ENCODE measurements at regions of chr9 and their contacts with region 1.

Region 1: DNA sequence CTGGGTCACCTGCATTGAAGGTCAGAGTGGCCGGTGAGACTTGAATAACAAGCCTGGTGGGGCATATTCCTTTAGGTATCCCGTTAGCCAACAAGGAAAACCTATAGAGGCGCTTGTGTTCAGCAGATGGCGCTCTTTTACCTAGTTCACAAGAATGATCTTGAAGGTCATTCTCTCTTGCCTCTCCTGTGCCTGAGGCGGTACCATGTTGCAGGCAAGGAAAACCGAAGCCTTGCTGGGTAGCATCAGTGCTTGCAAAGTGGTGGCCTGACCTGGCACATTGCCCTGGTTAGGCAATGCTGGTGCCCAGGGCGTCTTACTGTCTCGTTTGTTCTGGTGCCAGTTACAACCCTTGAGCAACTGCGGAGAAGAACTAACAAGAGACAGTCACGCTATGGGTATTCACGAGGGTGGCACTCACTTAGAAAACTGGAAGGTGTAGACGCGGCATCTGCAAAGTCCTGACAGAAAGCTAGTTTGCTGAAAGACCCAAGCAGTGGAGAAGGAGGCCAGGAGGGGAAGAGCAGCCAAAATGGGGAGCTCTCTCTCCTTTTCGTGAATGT is 56.7 kb downstream of the AOPEP start:
- DNase-seq: peak; percentile 83
- H3K4me3 ChIP-seq: no peak overlapping the region
- H3K27ac ChIP-seq: no peak overlapping the region
- H3K4me1 ChIP-seq: no peaks in the 10 kb centered on the region
- H3K27me3 ChIP-seq: no peaks in the 10 kb centered on the region
- CTCF ChIP-seq: peak; percentile 59

Region 2: GRCh38 chr9:95018099-95018936 is 235.1 kb after region 1 on chr9:
- intact Hi-C with region 1: loop called (anchors 10 kb)
- DNase-seq: no peak
- H3K4me3 ChIP-seq: no peak overlapping the region
- H3K27ac ChIP-seq: peak overlapping the region; percentile 34
- H3K4me1 ChIP-seq: peaks cover 2% of the 10 kb centered on the region
- H3K27me3 ChIP-seq: no peaks in the 10 kb centered on the region
- CTCF ChIP-seq: no peak

Region 3: DNA sequence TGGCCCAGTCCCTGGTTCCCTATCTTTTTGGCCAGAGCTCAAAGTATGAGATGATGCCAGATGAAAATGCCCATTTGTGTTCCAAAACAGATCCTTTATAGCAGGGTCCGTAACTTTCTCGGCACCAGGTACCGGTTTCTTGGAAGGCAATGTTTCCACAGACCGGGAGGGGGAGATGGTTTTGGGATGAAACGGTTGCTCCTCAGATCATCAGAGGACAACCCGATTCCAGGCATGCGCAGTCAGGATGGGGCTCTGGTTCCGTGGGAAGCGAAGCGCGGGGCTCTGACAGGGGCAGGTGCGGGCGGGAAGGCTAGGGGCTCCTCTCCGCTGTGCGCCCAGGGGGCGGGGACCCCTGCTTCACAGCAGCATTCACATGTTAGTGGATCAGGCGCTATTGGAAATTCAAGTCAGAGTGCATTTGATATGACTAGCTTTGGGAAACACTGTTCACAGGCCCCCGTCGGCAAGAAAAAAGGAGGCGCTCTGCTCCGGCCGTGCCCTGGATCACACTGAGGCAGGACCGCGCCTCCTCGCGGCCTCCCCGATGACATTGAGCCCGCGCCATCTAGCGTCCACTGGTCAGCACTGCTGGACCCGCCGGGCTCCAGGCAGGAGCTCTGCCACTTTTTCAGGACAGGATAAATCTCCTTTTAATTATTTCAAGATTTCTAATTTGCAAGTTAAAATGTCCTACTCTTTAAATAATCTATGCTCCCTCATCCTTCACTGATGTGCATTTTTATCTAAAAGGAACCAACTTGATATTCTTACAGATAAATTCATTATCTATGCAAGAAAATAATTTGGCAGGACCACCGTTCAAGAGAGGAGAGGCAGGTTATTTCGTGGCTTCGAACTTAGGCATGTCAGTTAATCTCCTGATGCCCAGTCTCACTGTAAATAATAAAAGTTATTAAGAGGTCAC is 344.3 kb after region 1 on chr9:
- intact Hi-C with region 1: loop called (anchors 5 kb)
- DNase-seq: peak; percentile 86
- H3K4me3 ChIP-seq: no peak overlapping the region
- H3K27ac ChIP-seq: no peak overlapping the region
- H3K4me1 ChIP-seq: no peaks in the 10 kb centered on the region
- H3K27me3 ChIP-seq: no peaks in the 10 kb centered on the region
- CTCF ChIP-seq: peak; percentile 90